ENCODE measurements at regions of chr3 and their contacts with region 1.

Region 1: DNA sequence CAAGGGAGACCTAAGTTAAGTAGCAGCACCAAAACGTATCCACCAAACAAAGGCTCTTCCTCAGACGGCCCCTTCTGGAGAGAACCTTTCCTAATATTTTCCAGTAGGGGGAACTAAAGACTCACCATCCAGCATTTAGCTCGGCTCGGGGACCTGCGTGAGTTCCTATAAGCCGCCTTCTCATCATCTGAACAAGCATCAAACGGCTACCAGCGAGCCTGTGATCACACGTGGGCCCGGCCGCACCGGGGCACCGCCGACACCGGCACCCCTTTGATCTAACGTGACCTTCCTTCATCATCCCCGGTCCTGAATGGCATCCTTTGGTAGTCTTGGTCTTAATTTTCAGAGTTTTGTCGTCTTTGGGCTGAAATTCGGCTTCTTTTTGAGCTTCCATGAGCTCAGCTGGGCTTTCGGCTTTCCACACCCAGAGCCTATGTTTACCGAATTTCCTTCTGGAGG is 1.4 kb upstream of the ROBO2 start:
- DNase-seq: peak in 4 of 5 donors; percentile 34 to 61 (median 48)
- ATAC-seq: peak; percentile 84 to 95 (median 94)
- H3K4me3 ChIP-seq: peak overlapping the region in 10 of 12 donors; percentile 11 to 59 (median 48)
- H3K27ac ChIP-seq: no peak overlapping the region
- H3K4me1 ChIP-seq: peaks cover 0 to 19% (median 7%) of the 10 kb centered on the region in 12 donors
- H3K27me3 ChIP-seq: peaks cover 0 to 65% (median 16%) of the 10 kb centered on the region in 9 donors
- CTCF ChIP-seq: peak; percentile 25 to 72 (median 56)
- POLR2A ChIP-seq: no peak

Region 2: GRCh38 chr3:77147836-77148578 is 109.5 kb after region 1 on chr3:
- intact Hi-C with region 1: no loop called
- DNase-seq: no peak
- ATAC-seq: no peak
- H3K4me3 ChIP-seq: no peak overlapping the region
- H3K27ac ChIP-seq: no peak overlapping the region
- H3K4me1 ChIP-seq: no peaks in the 10 kb centered on the region
- H3K27me3 ChIP-seq: no peaks in the 10 kb centered on the region
- CTCF ChIP-seq: no peak
- POLR2A ChIP-seq: no peak

Region 3: GRCh38 chr3:77254967-77255831 is 216.7 kb after region 1 on chr3:
- intact Hi-C with region 1: loop called (anchors 1 to 5 kb)
- DNase-seq: no peak
- ATAC-seq: peak in 3 of 4 donors; percentile 49 to 77 (median 53)
- H3K4me3 ChIP-seq: no peak overlapping the region
- H3K27ac ChIP-seq: no peak overlapping the region
- H3K4me1 ChIP-seq: no peaks in the 10 kb centered on the region
- H3K27me3 ChIP-seq: no peaks in the 10 kb centered on the region
- CTCF ChIP-seq: peak; percentile 40 to 75 (median 60)
- POLR2A ChIP-seq: no peak

Region 4: DNA sequence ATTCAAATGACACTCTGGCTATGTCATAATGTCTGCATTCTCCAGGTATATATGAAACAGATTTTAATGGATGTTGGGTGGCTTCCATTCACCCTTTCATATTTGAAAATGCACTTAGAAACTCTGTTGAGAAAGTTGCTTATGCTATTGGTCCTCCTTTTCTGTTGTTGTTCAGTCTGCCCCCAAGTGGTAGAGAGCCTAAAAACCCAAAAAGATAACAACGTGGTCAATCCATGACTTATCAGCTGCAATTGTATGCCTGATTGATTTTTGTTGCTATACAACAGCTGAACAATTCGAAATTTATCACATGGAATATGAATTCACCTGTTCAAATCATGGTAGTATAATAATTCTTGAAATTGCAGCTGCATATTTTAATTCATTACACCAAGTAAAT is 281.2 kb after region 1 on chr3:
- intact Hi-C with region 1: loop called in 1 of 10 experiments (anchors 10 kb)
- DNase-seq: no peak
- ATAC-seq: no peak
- H3K4me3 ChIP-seq: no peak overlapping the region
- H3K27ac ChIP-seq: no peak overlapping the region
- H3K4me1 ChIP-seq: no peaks in the 10 kb centered on the region
- H3K27me3 ChIP-seq: no peaks in the 10 kb centered on the region
- CTCF ChIP-seq: peak in 2 of 12 donors; percentile 8 to 14
- POLR2A ChIP-seq: no peak

Region 5: DNA sequence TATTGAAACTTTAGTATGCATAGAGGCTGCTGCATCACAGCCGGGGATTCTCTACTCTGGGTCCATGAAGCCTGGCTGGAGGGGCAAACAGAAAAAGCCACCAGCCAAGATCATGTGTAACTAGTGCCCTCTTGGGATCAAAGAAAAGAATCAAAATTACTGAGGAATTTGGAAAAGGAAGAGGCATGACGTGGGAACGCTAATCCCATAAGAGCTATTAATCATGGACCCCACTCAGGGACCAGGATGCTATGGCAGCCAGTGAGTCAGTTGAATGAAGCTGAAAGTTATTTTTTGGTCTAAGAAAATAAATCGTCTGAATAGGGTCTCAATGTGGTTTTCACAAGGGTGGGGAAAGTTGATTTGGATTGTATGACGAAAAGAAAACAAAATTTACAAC is 1166.5 kb after region 1 on chr3:
- intact Hi-C with region 1: loop called in 1 of 10 experiments (anchors 10 kb)
- DNase-seq: peak in 1 of 5 donors; percentile 6
- ATAC-seq: peak in 1 of 4 donors; percentile 43
- H3K4me3 ChIP-seq: no peak overlapping the region
- H3K27ac ChIP-seq: no peak overlapping the region
- H3K4me1 ChIP-seq: peaks cover 0 to 8% (median 0%) of the 10 kb centered on the region in 12 donors
- H3K27me3 ChIP-seq: no peaks in the 10 kb centered on the region
- CTCF ChIP-seq: peak in 5 of 12 donors; percentile 17 to 39 (median 22)
- POLR2A ChIP-seq: no peak

Region 6: DNA sequence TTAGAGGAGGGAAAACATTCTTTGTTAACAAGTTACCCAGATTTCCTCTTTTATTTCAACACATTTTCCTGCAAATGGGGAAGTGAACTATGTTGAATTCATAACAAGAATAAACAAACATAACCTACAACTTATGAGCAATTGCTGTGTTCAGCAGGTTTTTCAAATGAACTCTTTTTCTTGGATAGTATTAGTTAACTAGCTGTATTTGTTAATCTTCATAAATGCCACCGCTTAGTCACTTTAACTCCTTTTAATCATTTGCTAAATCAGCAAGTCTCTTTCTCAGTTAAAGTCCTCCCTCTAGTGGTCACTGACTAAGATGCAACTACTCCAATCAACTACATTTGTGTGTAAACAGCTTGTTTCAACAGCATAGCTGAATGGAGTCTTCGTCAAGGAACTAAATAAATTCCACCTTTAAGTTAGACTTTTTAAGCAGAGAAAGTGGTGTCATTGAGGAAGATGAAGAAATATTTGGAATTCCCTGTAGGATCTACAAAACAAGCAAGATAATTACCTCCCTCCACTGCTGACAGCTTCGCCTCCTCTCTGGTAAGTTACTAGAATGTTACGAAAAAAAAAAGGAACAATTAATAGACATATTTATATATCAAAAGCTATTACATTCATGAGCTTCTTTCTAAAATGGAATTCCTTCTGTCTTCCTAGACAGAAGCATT is 1607.3 kb after region 1 on chr3:
- intact Hi-C with region 1: loop called in 6 of 10 experiments (anchors 5 to 10 kb)
- DNase-seq: no peak
- ATAC-seq: peak in 1 of 4 donors; percentile 39
- H3K4me3 ChIP-seq: no peak overlapping the region
- H3K27ac ChIP-seq: no peak overlapping the region
- H3K4me1 ChIP-seq: peaks cover 0 to 10% (median 0%) of the 10 kb centered on the region in 12 donors
- H3K27me3 ChIP-seq: no peaks in the 10 kb centered on the region
- CTCF ChIP-seq: peak; percentile 72 to 93 (median 80)
- POLR2A ChIP-seq: no peak